ENCODE measurements at regions of chr16 and their contacts with region 1.

Region 1: DNA sequence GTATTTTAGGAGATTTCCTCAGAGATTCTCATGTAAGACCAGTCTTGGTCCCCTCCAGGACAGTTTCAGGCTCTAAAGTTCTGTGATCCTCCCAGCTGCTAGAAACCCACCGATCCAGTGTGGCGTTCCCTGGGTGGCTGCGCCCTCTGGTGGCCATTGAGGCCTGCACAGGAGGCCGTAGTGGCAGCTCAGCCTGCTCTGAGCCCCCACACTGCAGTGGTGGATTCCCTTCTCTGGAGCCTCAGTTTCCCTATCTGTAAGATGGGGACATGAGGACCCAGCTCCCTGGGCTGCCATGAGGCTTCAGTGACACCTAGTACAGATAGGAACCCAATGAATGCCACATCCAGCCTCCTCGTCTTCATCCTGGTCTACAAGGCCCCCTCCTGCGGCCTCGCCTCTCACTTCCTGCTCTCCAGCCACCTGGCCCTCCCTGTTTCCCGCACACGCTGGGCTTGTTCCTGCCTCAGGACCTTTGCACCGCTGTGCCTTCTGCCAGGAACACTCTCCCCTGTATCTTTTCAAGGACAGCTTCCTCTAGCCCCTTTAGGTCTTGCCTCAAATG is 16.5 kb downstream of the CCDC102A start:
- DNase-seq: peak; percentile 85 to 92
- H3K4me3 ChIP-seq: no peak overlapping the region
- H3K4me3 Mint-ChIP-seq: no peak overlapping the region
- H3K27ac Mint-ChIP-seq: peak overlapping the region; percentile 61
- H3K4me1 ChIP-seq: peaks cover 13% of the 10 kb centered on the region
- H3K4me1 Mint-ChIP-seq: peaks cover 19% of the 10 kb centered on the region
- H3K27me3 ChIP-seq: no peaks in the 10 kb centered on the region
- H3K27me3 Mint-ChIP-seq: no peaks in the 10 kb centered on the region
- CTCF ChIP-seq: peak; percentile 96 to 99

Region 2: DNA sequence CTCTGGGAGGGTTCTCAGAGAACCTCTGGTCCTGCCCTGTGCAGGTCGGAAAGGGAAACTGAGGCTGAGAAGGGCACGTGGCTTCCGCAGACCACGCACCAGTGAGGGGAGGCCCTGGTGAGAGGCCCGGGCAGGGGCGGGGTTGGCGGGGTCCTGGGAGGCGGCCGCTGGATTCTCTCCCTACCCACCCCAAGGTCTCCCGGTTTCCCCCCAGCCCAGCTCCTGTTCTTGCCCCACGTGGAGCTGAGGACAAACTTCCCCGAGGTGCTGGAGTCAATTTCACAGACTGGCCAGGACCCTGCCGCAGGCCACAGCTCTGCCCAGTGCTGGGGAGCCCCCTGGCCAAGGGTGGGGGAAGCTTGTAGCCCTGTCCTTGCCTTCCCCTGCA is 103.8 kb before region 1 on chr16:
- CTCF ChIA-PET with region 1: interaction called, 35 read pairs
- POLR2A ChIA-PET with region 1: no interaction called
- intact Hi-C with region 1: loop called (anchors 1 kb)
- DNase-seq: no peak
- H3K4me3 ChIP-seq: no peak overlapping the region
- H3K4me3 Mint-ChIP-seq: no peak overlapping the region
- H3K27ac Mint-ChIP-seq: no peak overlapping the region
- H3K4me1 ChIP-seq: peaks cover 28% of the 10 kb centered on the region
- H3K4me1 Mint-ChIP-seq: peaks cover 34% of the 10 kb centered on the region
- H3K27me3 ChIP-seq: no peaks in the 10 kb centered on the region
- H3K27me3 Mint-ChIP-seq: no peaks in the 10 kb centered on the region
- CTCF ChIP-seq: no peak

Region 3: GRCh38 chr16:57422026-57422944 is 97.6 kb before region 1 on chr16:
- CTCF ChIA-PET with region 1: interaction called, 35 read pairs
- POLR2A ChIA-PET with region 1: no interaction called
- intact Hi-C with region 1: loop called (anchors 1 kb)
- DNase-seq: peak in 1 of 2 experiments; percentile 75
- H3K4me3 ChIP-seq: no peak overlapping the region
- H3K4me3 Mint-ChIP-seq: peak overlapping the region; percentile 5
- H3K27ac Mint-ChIP-seq: no peak overlapping the region
- H3K4me1 ChIP-seq: peaks cover 14% of the 10 kb centered on the region
- H3K4me1 Mint-ChIP-seq: peaks cover 32% of the 10 kb centered on the region
- H3K27me3 ChIP-seq: no peaks in the 10 kb centered on the region
- H3K27me3 Mint-ChIP-seq: no peaks in the 10 kb centered on the region
- CTCF ChIP-seq: peak; percentile 59 to 97

Region 4: DNA sequence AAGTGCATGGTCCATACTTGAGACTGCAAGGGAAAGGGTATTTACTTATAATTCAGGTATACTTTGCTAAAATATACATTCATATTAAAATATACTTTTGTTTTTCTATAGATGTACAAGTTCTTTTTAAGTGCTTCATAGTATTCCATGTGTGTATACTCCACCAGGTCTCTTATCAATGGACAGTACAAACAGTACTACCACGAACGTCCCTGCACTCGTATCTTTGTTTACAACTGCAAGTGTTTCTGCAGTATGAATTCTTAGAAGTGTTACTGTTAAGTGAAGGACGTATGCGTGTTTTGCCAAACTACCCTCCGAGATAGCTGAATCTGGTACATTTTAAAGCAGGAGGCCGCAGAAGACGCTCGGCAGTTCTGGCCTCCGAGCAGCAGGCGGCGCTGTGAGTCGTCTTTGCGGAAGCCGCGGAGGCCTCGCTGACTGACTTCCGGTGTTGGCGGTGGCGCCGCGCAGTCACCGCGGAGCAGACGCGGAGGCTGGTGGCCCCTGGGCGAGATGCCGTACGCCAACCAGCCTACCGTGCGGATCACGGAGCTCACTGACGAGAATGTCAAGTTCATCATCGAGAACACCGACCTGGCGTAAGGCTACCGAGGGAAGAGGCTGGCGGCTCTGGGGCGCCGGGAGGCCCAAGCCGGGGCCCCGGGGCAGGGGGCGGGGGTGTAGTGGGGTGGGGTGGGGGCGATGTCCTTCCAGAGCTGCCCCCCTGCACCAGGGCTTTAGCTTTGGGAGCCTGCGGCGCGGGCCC is 57.5 kb before region 1 on chr16 and contains the start of gene POLR2C:
- CTCF ChIA-PET with region 1: interaction called, 17 read pairs
- POLR2A ChIA-PET with region 1: interaction called, 4 read pairs
- intact Hi-C with region 1: loop called (anchors 1 kb)
- DNase-seq: peak; percentile 88 to 95
- H3K4me3 ChIP-seq: peak within 1 kb of the TSS; percentile 73
- H3K4me3 Mint-ChIP-seq: peak within 1 kb of the TSS; percentile 85
- H3K27ac Mint-ChIP-seq: peak within 1 kb of the TSS; percentile 92
- H3K4me1 ChIP-seq: 0 out of 2 replicates have a peak, but pooled peaks cover 8% of the 10 kb centered on the region
- H3K4me1 Mint-ChIP-seq: no peaks in the 10 kb centered on the region
- H3K27me3 ChIP-seq: no peaks in the 10 kb centered on the region
- H3K27me3 Mint-ChIP-seq: no peaks in the 10 kb centered on the region
- CTCF ChIP-seq: peak; percentile 96 to 98
- total RNA-seq, gene POLR2C: 100 and 102 TPM in 2 replicates

Region 5: DNA sequence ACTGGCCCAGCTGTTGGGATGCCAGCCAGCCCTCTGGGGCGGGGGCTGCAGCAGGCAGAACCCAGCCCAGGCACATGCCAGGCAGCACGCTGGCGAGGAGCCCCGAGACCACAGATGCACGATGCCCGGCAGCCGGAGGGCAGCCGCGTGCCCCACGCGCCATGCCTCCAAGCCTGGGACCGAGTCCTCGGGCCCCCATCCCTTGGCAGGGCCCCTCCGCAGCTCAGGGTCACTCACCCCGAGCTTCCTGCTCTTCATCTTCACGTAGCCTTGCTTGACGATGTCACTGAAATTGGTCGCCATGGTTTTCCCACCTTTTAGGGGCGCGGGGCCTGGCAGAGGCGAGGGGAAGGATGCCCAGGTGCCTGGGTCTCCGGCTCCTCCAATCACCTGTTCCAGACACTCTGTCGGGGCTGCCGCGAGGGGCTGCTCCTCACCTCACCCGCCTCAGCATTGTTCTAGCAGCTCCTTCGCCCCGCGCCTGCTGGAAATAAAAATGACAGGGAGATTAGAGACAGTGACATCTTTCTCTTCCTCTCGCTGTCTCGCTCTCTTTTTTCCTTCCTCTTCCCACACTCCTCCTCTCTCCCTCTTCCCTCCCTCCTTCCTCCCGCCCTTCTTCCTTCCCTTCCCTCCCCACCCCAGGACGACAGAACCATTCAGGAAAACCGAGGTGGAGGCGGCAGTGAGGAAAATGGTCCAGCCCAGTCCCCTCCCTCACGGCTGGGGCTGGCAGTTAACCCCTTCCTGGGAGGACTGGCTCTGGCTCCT is 40.5 kb before region 1 on chr16:
- CTCF ChIA-PET with region 1: interaction called, 23 read pairs
- POLR2A ChIA-PET with region 1: interaction called, 4 read pairs
- intact Hi-C with region 1: loop called (anchors 1 kb)
- DNase-seq: peak; percentile 88 to 89
- H3K4me3 ChIP-seq: peak overlapping the region; percentile 50
- H3K4me3 Mint-ChIP-seq: peak overlapping the region; percentile 89
- H3K27ac Mint-ChIP-seq: peak overlapping the region; percentile 100
- H3K4me1 ChIP-seq: peaks cover 45% of the 10 kb centered on the region
- H3K4me1 Mint-ChIP-seq: peaks cover 39% of the 10 kb centered on the region
- H3K27me3 ChIP-seq: no peaks in the 10 kb centered on the region
- H3K27me3 Mint-ChIP-seq: no peaks in the 10 kb centered on the region
- CTCF ChIP-seq: no peak

Region 6: DNA sequence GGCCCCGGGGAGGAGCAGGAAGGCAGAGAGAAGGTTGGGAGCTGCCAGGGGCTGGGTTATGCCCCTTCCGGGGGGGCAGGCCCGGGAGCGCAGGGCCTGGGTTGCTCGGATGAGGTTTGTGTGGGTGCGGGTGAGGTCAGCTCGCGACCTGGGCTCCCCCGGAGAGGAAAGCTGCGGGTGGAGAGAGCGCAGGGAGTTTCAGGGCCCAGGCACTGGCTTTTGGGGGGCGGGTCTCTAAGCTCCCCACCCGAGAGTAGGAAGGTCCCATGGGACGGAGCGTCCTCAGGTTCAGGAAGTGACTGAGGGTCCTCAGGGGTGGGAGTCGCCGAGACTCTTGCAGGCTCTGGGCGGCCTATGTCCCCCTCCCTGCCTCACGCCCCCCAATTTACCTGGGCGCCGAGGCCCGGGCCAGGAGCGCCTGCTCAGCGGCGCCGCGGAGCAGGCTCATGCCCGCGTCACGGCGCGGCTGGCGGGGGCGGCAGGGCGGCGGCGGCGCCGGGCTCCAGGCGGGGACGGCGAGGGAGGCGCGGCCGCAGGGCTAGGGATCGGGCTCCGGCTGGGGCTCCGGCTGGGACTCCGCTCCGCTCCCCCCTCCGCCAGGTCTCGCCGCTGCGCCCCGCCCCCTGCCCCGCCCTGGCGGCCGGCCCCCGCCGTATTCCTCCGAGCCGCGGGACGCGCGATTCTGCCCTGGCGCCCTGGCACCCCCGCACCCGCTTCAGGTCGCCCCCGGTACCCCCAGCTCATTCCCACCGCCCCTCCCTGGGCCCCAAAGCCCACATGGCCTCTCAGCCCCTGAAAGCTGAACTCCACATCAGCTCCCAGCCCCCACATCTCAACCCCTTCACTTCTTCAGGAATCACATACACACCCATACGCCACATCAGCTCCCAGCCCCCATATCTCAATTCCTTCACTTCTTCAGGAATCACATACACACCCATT is 33.7 kb before region 1 on chr16 and contains the start of gene DOK4:
- CTCF ChIA-PET with region 1: interaction called, 17 read pairs
- POLR2A ChIA-PET with region 1: no interaction called
- intact Hi-C with region 1: no loop called
- DNase-seq: peak; percentile 83 to 93
- H3K4me3 ChIP-seq: peak within 1 kb of the TSS; percentile 67
- H3K4me3 Mint-ChIP-seq: peak within 1 kb of the TSS; percentile 95
- H3K27ac Mint-ChIP-seq: peak within 1 kb of the TSS; percentile 94
- H3K4me1 ChIP-seq: peaks cover 31% of the 10 kb centered on the region
- H3K4me1 Mint-ChIP-seq: peaks cover 32% of the 10 kb centered on the region
- H3K27me3 ChIP-seq: no peaks in the 10 kb centered on the region
- H3K27me3 Mint-ChIP-seq: no peaks in the 10 kb centered on the region
- CTCF ChIP-seq: no peak
- total RNA-seq, gene DOK4: 111 and 122 TPM in 2 replicates

Measured in Caco-2 (cell line).